Calu3 (cell line): ENCODE measurements at regions of chr1 and their contacts with region 1.

Region 1: GRCh38 chr1:183023601-183024316 is 539 bp downstream of the LAMC1 start:
- DNase-seq: peak; percentile 94
- H3K4me3 Mint-ChIP-seq: peak overlapping the region; percentile 94
- H3K27ac Mint-ChIP-seq: peak overlapping the region; percentile 85
- H3K4me1 Mint-ChIP-seq: peaks cover 42% of the 10 kb centered on the region
- H3K27me3 Mint-ChIP-seq: no peaks in the 10 kb centered on the region
- CTCF ChIP-seq: peak; percentile 78

Region 2: GRCh38 chr1:182588500-182589452 is 435.0 kb before region 1 on chr1 and contains the start of gene RNASEL:
- CTCF ChIA-PET with region 1: no interaction called
- intact Hi-C with region 1: no loop called
- DNase-seq: peak; percentile 81
- H3K4me3 Mint-ChIP-seq: peak within 1 kb of the TSS; percentile 90
- H3K27ac Mint-ChIP-seq: peak within 1 kb of the TSS; percentile 95
- H3K4me1 Mint-ChIP-seq: no peaks in the 10 kb centered on the region
- H3K27me3 Mint-ChIP-seq: peaks cover 25% of the 10 kb centered on the region
- CTCF ChIP-seq: no peak
- total RNA-seq, gene RNASEL: 7.0 and 10.0 TPM in 2 replicates

Region 3: DNA sequence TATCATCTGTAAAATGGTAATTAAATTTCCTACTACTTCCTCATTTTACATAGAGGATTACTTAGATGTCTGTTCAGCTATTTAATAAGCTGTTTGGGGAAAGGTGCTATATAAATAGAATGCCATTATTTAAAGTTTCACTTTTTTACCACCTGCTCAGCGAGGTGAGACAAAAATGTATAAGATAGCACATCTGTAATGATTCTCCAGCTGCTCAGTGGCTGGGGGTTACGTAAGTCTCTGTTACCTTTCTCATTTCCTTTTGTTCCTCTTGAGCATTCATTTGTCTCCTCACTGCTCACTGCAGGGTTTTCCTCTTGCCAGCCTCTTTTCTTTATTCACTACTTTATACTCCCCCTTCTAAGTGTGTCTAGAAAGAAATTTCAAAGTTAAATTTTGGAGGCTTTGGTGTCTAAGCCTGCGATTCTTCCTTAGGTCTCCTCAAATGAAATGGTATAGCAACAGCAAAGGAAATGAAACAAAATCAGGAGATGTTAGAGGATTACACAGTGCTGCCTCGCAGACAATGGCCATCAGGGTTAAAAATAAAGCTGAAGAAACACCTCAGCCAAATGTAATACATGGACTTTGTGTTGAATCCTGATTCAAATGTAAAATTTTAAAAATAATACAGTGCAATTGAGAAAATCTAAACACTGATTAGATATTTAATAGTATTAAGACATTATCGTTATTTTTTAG is 346.2 kb before region 1 on chr1:
- CTCF ChIA-PET with region 1: no interaction called
- intact Hi-C with region 1: no loop called
- DNase-seq: no peak
- H3K4me3 Mint-ChIP-seq: no peak overlapping the region
- H3K27ac Mint-ChIP-seq: no peak overlapping the region
- H3K4me1 Mint-ChIP-seq: no peaks in the 10 kb centered on the region
- H3K27me3 Mint-ChIP-seq: peaks cover 49% of the 10 kb centered on the region
- CTCF ChIP-seq: no peak

Region 4: DNA sequence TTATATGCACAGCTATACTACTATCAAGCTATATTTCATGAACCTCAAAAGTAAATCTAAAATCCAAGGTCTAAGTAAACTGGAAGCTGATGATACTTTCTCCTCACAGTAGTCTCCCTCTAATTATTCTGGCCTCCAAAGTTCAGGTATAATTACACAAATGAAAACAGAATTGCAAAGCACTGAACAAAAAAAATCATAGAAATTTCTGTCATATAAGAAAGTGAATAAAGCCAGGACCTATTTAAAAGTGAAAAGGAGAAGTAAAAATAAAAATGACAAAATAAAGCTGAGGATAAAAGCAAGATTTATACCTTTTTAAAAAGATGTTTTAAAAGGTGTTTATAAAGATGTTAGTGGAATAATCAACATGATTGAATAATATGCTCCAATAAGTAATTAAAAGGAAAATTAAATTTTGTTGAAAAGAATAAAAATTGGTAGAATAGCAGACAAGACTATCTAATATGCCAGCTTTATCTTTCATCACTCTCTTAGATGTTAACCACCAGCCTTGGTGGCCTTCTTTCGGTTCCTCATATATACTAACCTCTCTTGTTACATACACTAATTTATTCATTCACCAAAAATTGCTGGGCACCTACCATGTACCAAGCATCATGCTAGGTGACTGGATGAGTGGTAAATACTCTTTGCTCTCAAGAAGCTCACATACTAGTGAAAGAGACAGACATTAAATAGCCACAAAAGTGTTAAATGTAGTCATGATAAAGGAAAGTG is 95.9 kb before region 1 on chr1:
- CTCF ChIA-PET with region 1: no interaction called
- intact Hi-C with region 1: no loop called
- DNase-seq: no peak
- H3K4me3 Mint-ChIP-seq: no peak overlapping the region
- H3K27ac Mint-ChIP-seq: no peak overlapping the region
- H3K4me1 Mint-ChIP-seq: no peaks in the 10 kb centered on the region
- H3K27me3 Mint-ChIP-seq: peaks cover 30% of the 10 kb centered on the region
- CTCF ChIP-seq: no peak

Region 5: DNA sequence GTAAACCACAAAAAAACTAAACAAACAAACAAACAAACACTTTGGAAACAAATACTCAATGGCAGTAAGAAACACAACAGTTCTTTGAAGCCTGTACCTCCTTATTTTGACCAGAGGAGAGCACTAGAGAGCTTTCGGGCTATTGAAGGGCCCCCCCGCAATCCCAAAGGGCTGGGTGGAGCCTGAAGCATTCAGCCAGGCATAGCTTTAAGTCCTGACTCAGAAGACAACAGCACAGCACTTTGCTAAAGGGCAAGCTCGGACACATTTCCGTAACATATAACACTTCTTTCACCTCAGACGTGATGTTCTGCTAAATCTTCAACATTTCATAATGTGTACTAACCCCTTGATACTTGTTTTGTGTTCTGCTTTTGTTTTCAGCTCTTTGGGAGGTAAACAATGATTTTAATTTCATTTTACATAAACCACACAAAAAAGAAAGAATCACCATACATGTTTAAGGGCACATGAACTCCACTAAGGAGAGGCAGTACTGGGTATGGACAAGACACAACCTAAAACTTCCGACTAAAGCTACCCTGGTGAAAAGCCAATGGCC is 61.1 kb before region 1 on chr1:
- CTCF ChIA-PET with region 1: interaction called, 24 read pairs
- intact Hi-C with region 1: loop called (anchors 1 kb)
- DNase-seq: peak; percentile 80
- H3K4me3 Mint-ChIP-seq: peak overlapping the region; percentile 63
- H3K27ac Mint-ChIP-seq: peak overlapping the region; percentile 86
- H3K4me1 Mint-ChIP-seq: peaks cover 37% of the 10 kb centered on the region
- H3K27me3 Mint-ChIP-seq: no peaks in the 10 kb centered on the region
- CTCF ChIP-seq: peak; percentile 89

Region 6: DNA sequence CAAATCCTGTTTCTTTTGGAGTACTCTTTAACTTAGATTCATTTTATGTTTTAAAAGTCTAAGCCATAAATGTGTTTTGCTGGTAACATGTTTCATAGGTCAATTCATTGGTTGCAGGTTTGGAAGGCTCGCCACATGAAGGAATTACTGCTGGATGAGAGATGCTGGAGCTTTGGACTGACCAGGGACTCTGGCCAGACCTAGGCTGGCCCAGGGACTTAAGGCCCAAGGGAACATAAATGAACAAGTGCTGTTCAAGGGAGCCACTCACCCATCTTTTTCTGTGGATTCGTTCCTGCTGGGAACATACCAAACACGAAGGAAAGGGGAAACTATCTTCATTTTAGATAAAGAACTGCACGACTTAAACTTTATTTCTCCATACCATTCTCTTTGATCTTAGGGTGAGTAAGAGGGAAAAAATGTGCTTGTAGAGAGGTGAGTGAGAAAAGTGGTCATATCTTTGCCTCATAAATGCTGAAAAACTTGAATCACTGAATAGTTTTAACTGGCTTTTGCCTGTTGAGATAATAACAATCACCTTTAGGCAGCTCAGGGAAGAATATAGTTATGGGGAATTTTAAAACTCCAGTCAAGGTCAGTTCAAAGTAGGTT is 55.5 kb before region 1 on chr1:
- CTCF ChIA-PET with region 1: interaction called, 24 read pairs
- intact Hi-C with region 1: loop called (anchors 1 kb)
- DNase-seq: no peak
- H3K4me3 Mint-ChIP-seq: peak overlapping the region; percentile 19
- H3K27ac Mint-ChIP-seq: peak overlapping the region; percentile 53
- H3K4me1 Mint-ChIP-seq: peaks cover 61% of the 10 kb centered on the region
- H3K27me3 Mint-ChIP-seq: no peaks in the 10 kb centered on the region
- CTCF ChIP-seq: no peak

Region 7: GRCh38 chr1:182974506-182975191 is 49.1 kb before region 1 on chr1:
- CTCF ChIA-PET with region 1: interaction called, 5 read pairs
- intact Hi-C with region 1: loop called (anchors 2 kb)
- DNase-seq: no peak
- H3K4me3 Mint-ChIP-seq: no peak overlapping the region
- H3K27ac Mint-ChIP-seq: peak overlapping the region; percentile 37
- H3K4me1 Mint-ChIP-seq: peaks cover 61% of the 10 kb centered on the region
- H3K27me3 Mint-ChIP-seq: no peaks in the 10 kb centered on the region
- CTCF ChIP-seq: no peak

Region 8: DNA sequence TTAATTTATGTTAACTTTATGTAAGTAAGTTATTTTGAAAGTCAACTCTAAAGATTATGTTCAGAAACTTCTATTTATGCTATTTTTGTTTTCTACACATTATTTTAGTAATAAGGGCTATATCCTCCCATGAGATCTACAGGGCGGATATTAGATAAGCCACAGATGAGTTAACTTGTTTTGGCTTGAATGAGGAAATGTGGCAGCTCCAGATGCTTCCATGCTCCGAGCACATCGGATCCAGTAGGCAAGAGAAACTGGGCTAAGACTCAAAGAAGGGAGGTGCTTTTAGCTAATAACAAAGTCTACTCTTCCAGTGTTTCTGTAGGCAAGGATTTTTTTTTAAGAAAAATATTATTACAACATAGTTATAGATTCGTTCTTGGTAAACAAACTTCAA is 20.6 kb before region 1 on chr1:
- CTCF ChIA-PET with region 1: interaction called, 12 read pairs
- intact Hi-C with region 1: loop called (anchors 1 kb)
- DNase-seq: no peak
- H3K4me3 Mint-ChIP-seq: peak overlapping the region; percentile 50
- H3K27ac Mint-ChIP-seq: peak overlapping the region; percentile 76
- H3K4me1 Mint-ChIP-seq: peaks cover 66% of the 10 kb centered on the region
- H3K27me3 Mint-ChIP-seq: no peaks in the 10 kb centered on the region
- CTCF ChIP-seq: no peak

Region 9: GRCh38 chr1:183180634-183181056 is 156.9 kb after region 1 on chr1:
- CTCF ChIA-PET with region 1: no interaction called
- intact Hi-C with region 1: loop called (anchors 2 kb)
- DNase-seq: peak; percentile 92
- H3K4me3 Mint-ChIP-seq: peak overlapping the region; percentile 10
- H3K27ac Mint-ChIP-seq: peak overlapping the region; percentile 93
- H3K4me1 Mint-ChIP-seq: peaks cover 68% of the 10 kb centered on the region
- H3K27me3 Mint-ChIP-seq: no peaks in the 10 kb centered on the region
- CTCF ChIP-seq: no peak

Region 10: DNA sequence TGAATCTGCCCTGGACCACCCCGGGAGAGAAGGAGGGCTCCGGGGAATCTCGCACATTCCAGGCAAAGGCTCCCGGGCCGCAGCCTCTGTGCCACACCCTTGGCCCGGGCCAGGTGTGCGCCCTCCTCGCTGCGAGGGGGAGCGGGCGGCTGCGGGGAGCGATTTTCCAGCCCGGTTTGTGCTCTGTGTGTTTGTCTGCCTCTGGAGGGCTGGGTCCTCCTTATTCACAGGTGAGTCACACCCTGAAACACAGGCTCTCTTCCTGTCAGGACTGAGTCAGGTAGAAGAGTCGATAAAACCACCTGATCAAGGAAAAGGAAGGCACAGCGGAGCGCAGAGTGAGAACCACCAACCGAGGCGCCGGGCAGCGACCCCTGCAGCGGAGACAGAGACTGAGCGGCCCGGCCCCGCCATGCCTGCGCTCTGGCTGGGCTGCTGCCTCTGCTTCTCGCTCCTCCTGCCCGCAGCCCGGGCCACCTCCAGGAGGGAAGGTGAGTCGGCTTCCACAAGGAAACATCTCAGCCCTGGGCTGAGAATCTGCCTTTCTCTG is 162.3 kb after region 1 on chr1 and contains the start of gene LAMC2:
- CTCF ChIA-PET with region 1: no interaction called
- intact Hi-C with region 1: loop called (anchors 2 kb)
- DNase-seq: peak; percentile 96
- H3K4me3 Mint-ChIP-seq: peak within 1 kb of the TSS; percentile 68
- H3K27ac Mint-ChIP-seq: peak within 1 kb of the TSS; percentile 75
- H3K4me1 Mint-ChIP-seq: peaks cover 59% of the 10 kb centered on the region
- H3K27me3 Mint-ChIP-seq: no peaks in the 10 kb centered on the region
- CTCF ChIP-seq: peak; percentile 44
- total RNA-seq, gene LAMC2: 498 and 642 TPM in 2 replicates